Left ventricle myocardium superior (tissue), 1 donor: ENCODE measurements at regions of chr3 and their contacts with region 1.

Region 1: DNA sequence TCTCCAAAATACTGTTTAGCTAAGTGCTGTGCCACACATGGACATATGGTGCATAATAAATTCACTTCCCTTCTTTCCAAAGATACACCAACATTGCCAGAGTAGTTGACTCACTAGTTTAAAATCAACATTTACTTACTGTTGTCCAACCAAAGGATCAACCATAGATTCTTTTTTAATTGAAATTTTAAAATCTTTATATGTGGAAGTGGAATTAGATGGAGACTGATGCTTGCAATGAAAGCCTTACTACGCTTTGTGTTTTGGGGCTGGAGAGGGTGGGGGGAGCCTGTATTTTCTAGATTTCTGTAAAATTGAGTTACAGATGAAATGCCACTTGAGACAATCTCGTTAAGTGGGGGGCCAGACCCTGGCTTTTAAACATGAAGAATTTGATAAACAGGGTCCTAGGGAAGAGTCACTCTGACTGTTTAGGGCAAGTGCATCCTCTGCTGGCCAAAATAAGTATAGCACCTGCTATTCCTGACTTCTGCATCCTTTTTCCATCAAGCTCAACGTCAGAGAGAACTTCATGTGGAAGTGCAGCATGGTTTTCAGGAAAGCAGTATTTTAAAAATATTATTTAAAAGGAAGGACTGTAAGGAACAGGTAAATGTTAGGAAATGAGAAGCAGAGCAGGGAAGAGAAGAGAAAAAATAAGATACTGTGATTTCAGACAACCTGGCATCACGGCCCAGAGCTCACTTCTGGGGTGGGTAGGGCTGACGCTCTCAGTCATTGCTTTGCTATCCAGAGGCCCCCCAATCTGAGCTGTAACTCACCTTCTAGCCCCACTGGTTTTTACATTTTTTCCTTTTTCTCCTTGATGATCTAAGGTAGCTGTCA is 76.7 kb downstream of the BOC start:
- DNase-seq: no peak
- ATAC-seq: peak; percentile 67

Region 2: GRCh38 chr3:113051302-113051711 is 236.7 kb before region 1 on chr3:
- intact Hi-C with region 1: loop called (anchors 2 kb)
- DNase-seq: peak; percentile 68
- ATAC-seq: peak; percentile 93

Region 3: GRCh38 chr3:113136071-113136470 is 152.0 kb before region 1 on chr3:
- intact Hi-C with region 1: loop called (anchors 5 kb)
- DNase-seq: no peak
- ATAC-seq: no peak

Region 4: DNA sequence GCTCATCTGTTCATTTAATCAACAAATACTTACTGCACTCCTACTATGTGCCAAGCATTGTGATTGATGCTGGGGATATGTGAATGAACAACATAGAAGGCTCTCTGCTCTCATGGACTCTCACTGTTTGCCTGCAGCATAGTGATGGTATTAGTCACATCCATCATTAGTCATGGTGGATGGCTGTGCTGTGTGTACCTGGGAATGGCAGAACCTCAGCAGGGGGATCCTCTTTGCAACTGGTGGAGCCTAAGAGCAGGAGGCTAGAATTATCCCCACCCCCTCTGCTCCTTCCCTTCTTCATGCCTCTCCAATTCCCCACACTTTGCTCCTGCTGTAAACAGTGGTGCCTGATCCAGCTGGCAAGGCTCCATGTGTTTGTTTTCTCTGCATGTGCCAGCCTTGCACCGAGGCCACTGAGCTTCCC is 56.2 kb before region 1 on chr3:
- intact Hi-C with region 1: no loop called
- DNase-seq: no peak
- ATAC-seq: no peak

Region 5: GRCh38 chr3:113354307-113354706 is 66.3 kb after region 1 on chr3:
- intact Hi-C with region 1: no loop called
- DNase-seq: no peak
- ATAC-seq: no peak